Dendritic cell treated with granulocyte-macrophage colony-stimulating factor and Interleukin-4, amounts not matched to agents 40 ng/mL and 50 ng/mL, for 4 days (primary cell): ENCODE measurements at regions of chr19 and their contacts with region 1.

Region 1: DNA sequence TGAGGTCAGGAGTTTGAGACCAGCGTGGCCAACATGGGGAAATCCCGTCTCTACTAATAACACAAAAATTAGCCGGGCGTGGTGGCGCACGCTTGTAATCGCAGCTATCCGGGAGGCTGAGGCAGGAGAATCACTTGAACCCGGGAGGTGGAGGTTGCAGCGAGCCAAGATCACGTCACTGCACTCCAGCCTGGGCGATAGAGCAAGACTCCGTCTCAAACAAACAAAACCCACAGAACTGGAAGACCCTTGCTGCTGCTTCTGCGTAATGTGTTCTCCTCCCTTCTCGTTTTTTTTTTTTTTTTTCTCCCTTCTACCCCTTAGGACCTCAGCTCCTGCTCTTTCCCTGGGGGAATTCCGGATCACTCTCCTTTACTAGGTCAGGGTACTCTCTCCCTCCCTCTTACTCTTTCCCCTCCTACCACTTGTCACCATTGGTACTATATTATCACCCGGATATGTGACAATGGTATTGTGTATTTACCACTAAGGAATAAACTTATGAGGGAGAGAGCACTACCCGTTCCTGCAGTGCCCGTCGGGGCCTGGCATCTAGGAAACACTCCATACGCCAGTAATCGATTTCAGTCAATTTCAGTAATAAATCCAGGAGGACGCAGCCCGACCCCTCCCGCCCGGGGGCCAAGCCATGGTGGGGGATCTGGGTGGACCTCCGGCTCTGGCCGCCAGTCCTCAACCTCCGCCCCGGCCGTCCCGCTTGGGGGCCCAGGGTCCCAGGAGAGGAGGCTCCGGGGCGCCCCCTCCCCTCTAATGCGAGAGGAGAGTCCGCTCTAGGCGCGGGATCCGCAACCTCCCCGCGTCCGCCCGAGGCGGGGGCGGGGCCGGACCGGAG is 429 bp upstream of the GARRE1 start:
- H3K4me3 Mint-ChIP-seq: peak overlapping the region; percentile 87
- H3K27ac Mint-ChIP-seq: peak overlapping the region; percentile 85
- H3K4me1 Mint-ChIP-seq: peaks cover 9% of the 10 kb centered on the region
- H3K27me3 Mint-ChIP-seq: peaks cover 44% of the 10 kb centered on the region

Region 2: DNA sequence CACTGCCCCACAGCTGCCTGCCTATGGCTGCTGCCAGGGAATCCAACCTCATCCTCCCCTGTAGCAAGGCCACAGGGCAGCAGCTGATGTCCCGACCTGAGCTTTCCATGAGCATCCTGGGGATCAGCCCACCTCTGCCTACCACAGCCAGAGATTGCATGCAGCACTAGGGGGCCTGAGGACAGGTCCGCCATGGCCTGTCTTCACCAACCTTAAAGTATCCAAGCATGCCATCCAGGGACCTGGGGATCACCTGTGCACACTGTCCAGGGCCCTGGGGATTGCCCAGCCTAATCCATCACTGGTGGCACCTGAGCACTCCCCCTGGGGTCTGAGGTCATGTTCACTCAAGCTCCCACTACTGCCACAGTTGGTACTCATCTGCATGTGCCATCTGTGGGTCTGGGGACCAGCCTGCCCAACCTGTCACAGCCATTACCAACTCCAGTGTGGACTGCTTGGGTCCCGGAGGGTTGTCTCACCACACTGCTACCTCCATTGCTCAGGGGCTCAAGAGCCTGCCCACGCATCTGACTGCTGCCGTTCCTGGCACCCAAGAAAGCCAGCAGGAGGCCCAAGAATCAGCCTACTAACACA is 404.3 kb before region 1 on chr19:
- intact Hi-C with region 1: no loop called
- H3K4me3 Mint-ChIP-seq: no peak overlapping the region
- H3K27ac Mint-ChIP-seq: no peak overlapping the region
- H3K4me1 Mint-ChIP-seq: no peaks in the 10 kb centered on the region
- H3K27me3 Mint-ChIP-seq: peaks cover 15% of the 10 kb centered on the region

Region 3: GRCh38 chr19:34120846-34121639 is 132.9 kb before region 1 on chr19:
- intact Hi-C with region 1: no loop called
- H3K4me3 Mint-ChIP-seq: no peak overlapping the region
- H3K27ac Mint-ChIP-seq: no peak overlapping the region
- H3K4me1 Mint-ChIP-seq: no peaks in the 10 kb centered on the region
- H3K27me3 Mint-ChIP-seq: peaks cover 11% of the 10 kb centered on the region

Region 4: DNA sequence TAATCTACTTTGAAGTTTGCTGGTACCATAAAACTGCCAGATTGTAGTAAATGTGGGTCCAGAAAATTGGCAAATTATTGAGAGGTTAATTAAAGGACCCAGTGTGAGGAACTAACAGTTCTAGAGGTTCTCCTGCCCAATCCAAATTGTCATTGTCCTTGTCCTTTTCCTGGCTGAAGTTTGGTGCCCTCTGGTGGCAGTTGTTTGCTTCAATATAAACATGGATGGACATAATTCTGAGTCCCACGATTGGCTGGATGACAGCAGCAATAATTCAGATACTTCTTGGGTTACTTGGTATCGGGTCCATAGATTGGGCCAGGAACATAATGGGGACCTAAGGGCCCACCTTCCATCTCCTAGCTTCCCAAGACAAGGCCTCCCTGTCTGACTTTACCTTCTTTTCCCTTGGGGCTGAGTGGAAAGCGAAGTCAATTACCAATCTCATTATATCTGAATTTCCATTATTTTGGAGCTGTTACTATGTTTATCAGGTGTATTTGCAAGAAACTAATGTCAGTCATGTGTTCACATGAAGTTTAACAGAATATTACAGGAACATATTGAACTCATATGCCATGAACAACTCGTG is 33.4 kb before region 1 on chr19:
- intact Hi-C with region 1: no loop called
- H3K4me3 Mint-ChIP-seq: no peak overlapping the region
- H3K27ac Mint-ChIP-seq: no peak overlapping the region
- H3K4me1 Mint-ChIP-seq: peaks cover 30% of the 10 kb centered on the region
- H3K27me3 Mint-ChIP-seq: no peaks in the 10 kb centered on the region

Region 5: GRCh38 chr19:34269968-34270621 is 16.2 kb after region 1 on chr19:
- intact Hi-C with region 1: loop called (anchors 2 kb)
- H3K4me3 Mint-ChIP-seq: peak overlapping the region; percentile 24
- H3K27ac Mint-ChIP-seq: peak overlapping the region; percentile 93
- H3K4me1 Mint-ChIP-seq: peaks cover 27% of the 10 kb centered on the region
- H3K27me3 Mint-ChIP-seq: peaks cover 42% of the 10 kb centered on the region

Region 6: GRCh38 chr19:34336781-34337271 is 82.9 kb after region 1 on chr19:
- intact Hi-C with region 1: loop called (anchors 5 kb)
- H3K4me3 Mint-ChIP-seq: no peak overlapping the region
- H3K27ac Mint-ChIP-seq: no peak overlapping the region
- H3K4me1 Mint-ChIP-seq: peaks cover 4% of the 10 kb centered on the region
- H3K27me3 Mint-ChIP-seq: no peaks in the 10 kb centered on the region